ENCODE measurements at regions of chr2 and their contacts with region 1.

Region 1: DNA sequence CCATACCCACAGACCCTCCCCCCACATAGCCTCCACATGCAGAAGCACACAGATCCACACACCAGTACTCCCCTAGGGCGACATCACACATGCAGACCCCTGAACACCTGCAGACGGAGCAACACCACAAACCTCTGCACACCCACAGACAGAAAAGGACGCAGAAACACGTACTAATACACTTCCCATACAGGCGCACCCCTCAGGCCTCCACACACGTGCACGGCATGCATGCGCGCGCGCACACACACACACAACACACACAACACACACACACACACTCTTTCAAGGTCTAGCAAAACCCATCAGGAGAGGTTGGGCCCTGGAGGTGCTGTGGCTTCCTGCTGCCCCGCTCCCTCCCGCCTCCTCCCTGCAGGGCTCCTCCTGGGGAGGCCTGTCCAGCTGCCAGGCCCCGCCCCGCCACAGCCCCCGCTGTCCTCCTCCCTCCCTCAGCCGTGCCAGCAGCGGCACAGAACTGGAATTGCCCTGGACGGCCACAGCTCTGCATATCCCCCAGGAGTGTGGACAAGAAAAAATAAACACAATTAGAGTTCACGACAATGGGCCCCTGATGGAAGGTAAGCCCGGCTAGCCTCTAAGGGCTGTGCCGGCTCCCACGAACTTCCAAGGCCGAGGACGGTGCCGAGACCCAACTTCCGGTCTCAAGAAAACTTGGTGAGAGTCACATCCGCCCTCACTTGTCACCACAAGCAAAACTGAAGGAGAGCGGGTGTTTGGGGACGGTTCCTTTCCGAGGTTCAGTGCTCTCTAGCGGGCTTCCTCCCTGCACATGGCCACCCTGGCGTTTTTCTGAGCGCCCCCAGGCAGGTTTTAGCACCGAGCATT is 6.8 kb downstream of the ZFP36L2 start:
- DNase-seq: peak; percentile 80
- ATAC-seq: peak; percentile 75
- H3K4me3 ChIP-seq: peak overlapping the region; percentile 81
- H3K27ac ChIP-seq: peak overlapping the region; percentile 88
- H3K4me1 ChIP-seq: peaks cover 31% of the 10 kb centered on the region
- H3K27me3 ChIP-seq: no peaks in the 10 kb centered on the region
- CTCF ChIP-seq: no peak; a peak in 1 of 6 replicates
- EP300 ChIP-seq: peak; percentile 32 to 46; a peak in 1 of 4 replicates
- POLR2A ChIP-seq: no peak
- RAD21 ChIP-seq: no peak

Region 2: GRCh38 chr2:42974721-42975717 is 244.6 kb before region 1 on chr2:
- CTCF ChIA-PET with region 1: interaction called, 11 read pairs
- POLR2A ChIA-PET with region 1: interaction called, 3 read pairs
- RAD21 ChIA-PET with region 1: interaction called, 5 read pairs
- SMC1A ChIA-PET with region 1: interaction called, 3 read pairs
- in situ Hi-C with region 1: no loop called
- intact Hi-C with region 1: no loop called
- DNase-seq: no peak
- ATAC-seq: peak; percentile 67
- H3K4me3 ChIP-seq: no peak overlapping the region
- H3K27ac ChIP-seq: no peak overlapping the region
- H3K4me1 ChIP-seq: peaks cover 14% of the 10 kb centered on the region
- H3K27me3 ChIP-seq: peaks cover 0 to 1% of the 10 kb centered on the region in 2 experiments; a peak in 1 of 4 replicates
- CTCF ChIP-seq: peak; percentile 56 to 88 (median 83)
- EP300 ChIP-seq: no peak
- POLR2A ChIP-seq: no peak
- RAD21 ChIP-seq: peak; percentile 77

Region 3: GRCh38 chr2:43114210-43114609 is 105.4 kb before region 1 on chr2:
- CTCF ChIA-PET with region 1: no interaction called
- POLR2A ChIA-PET with region 1: no interaction called
- RAD21 ChIA-PET with region 1: no interaction called
- SMC1A ChIA-PET with region 1: no interaction called
- in situ Hi-C with region 1: no loop called
- intact Hi-C with region 1: no loop called
- DNase-seq: no peak
- ATAC-seq: no peak
- H3K4me3 ChIP-seq: no peak overlapping the region
- H3K27ac ChIP-seq: no peak overlapping the region
- H3K4me1 ChIP-seq: peaks cover 5% of the 10 kb centered on the region
- H3K27me3 ChIP-seq: no peaks in the 10 kb centered on the region
- CTCF ChIP-seq: no peak
- EP300 ChIP-seq: no peak
- POLR2A ChIP-seq: no peak
- RAD21 ChIP-seq: no peak

Region 4: DNA sequence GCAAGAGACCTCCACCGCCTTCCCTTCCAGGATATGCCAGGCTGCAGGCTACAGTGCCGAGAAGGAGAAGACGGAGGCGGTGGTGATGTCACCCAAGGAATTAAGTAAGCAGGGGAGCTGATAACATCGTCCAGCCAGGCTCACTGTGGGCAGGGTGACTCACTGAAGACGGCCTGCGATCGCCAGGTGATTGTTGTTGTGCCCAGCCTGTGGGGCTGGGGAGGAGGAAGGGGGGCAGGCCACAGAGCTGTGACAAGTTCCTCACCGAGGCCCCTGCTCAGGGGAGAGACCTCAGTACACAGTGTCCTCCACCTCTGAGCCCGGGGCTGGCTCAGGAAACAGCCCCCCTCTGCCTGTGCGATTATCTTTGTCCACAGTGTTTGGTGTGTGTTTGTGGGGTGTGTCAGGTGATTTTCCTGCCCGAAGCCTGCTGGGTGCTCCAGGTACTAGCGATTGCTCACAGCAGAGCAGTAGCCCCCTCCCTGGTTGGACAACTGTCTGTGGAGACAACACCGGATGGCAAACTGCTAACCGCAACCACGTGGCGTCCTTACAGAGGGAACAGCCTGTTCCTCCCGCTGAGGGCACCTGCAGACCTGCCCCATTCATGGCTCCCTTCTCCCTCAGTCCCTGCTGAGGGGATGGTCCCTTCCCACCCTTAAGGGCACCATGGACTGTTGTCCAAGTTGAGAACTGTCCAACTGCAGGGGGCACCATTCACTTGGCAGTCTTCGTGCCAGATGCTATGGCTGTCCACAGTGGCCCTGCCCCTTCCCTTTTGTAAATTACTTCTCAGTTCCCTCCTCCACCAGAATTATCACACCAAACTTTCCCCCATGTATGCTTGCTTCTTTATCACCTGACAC is 88.3 kb before region 1 on chr2:
- CTCF ChIA-PET with region 1: interaction called, 33 read pairs
- POLR2A ChIA-PET with region 1: interaction called, 5 read pairs
- RAD21 ChIA-PET with region 1: interaction called, 151 read pairs
- SMC1A ChIA-PET with region 1: interaction called, 16 read pairs
- in situ Hi-C with region 1: no loop called
- intact Hi-C with region 1: no loop called
- DNase-seq: no peak
- ATAC-seq: peak; percentile 81
- H3K4me3 ChIP-seq: no peak overlapping the region
- H3K27ac ChIP-seq: no peak overlapping the region
- H3K4me1 ChIP-seq: peaks cover 43% of the 10 kb centered on the region
- H3K27me3 ChIP-seq: no peaks in the 10 kb centered on the region
- CTCF ChIP-seq: peak; percentile 61 to 82 (median 62); a peak in 5 of 6 replicates
- EP300 ChIP-seq: no peak; a peak in 1 of 4 replicates
- POLR2A ChIP-seq: no peak
- RAD21 ChIP-seq: peak; percentile 78

Region 5: DNA sequence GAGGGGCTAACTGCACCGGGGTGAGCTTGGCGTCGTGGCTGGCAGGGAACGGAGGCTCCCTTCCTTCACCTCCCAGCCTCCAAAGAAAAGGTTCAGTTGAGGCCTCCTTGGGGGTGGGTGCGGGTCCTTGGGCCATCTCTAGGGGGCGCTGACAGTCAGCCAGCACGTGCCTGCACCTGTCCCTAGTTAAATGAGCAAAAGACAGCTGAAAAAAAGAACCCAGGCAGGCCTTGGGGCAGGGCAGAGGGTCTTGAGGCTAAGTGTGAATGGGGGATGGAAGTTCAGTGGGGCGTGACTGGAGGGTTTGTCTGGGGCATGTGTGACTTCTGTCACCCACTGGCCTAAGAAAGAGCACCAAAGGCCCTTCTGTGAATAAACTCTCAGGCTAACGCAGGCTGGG is 49.6 kb before region 1 on chr2:
- CTCF ChIA-PET with region 1: interaction called, 69 read pairs
- POLR2A ChIA-PET with region 1: interaction called, 11 read pairs
- RAD21 ChIA-PET with region 1: interaction called, 66 read pairs
- SMC1A ChIA-PET with region 1: interaction called, 147 read pairs
- in situ Hi-C with region 1: no loop called
- intact Hi-C with region 1: loop called (anchors 1 kb)
- DNase-seq: no peak
- ATAC-seq: peak; percentile 47
- H3K4me3 ChIP-seq: no peak overlapping the region
- H3K27ac ChIP-seq: no peak overlapping the region
- H3K4me1 ChIP-seq: peaks cover 35% of the 10 kb centered on the region
- H3K27me3 ChIP-seq: no peaks in the 10 kb centered on the region; a peak in 1 of 4 replicates
- CTCF ChIP-seq: peak; percentile 64 to 82 (median 81)
- EP300 ChIP-seq: no peak
- POLR2A ChIP-seq: no peak
- RAD21 ChIP-seq: peak; percentile 62

Region 6: DNA sequence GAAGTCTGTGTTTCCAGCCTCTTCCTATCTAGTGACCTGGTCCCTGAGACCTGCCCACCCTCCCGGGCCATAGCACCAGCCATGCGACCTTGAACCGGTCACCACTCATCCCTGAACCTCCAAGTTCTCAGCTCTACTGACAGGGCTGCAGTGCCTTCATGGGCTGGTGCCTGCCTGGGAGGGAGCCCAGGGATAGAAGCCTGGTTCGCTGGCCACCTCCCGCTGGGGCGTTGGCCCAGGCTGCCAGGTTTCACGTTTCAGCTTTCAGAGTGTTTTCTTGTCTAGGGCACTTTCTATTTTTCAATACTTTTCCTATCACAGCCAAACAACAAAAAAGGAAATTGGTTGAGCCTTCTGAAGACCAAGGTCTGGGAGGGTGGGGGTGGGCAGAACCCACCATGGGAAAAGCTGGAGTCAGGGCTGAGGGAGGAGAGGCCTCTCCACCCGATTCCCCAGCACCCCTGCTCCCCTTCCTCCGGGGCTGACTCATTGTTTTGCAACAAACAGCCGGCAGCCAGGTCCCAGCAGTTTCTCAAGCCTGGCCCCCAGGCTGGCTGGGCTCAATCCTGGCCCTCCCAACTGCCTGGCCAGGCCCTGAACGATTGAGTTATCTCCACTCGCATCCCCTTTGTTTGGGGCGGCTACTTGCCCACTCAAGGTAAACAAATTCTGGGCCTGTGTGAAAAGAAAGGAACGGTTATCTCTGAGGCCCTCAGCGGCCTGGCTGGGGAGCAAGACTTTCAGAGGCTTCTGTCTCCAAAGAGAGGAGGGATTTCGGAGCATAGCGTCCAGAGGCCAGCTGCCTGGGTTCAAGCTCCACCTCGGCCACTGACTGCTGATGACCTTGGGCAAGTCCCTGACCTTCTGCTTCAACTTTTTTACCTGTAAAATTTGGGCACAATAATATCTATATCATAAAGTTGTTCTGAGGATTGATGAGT is 40.7 kb before region 1 on chr2:
- CTCF ChIA-PET with region 1: interaction called, 15 read pairs
- POLR2A ChIA-PET with region 1: interaction called, 11 read pairs
- RAD21 ChIA-PET with region 1: interaction called, 66 read pairs
- SMC1A ChIA-PET with region 1: interaction called, 147 read pairs
- in situ Hi-C with region 1: no loop called
- intact Hi-C with region 1: loop called (anchors 1 kb)
- DNase-seq: no peak
- ATAC-seq: no peak
- H3K4me3 ChIP-seq: no peak overlapping the region
- H3K27ac ChIP-seq: no peak overlapping the region
- H3K4me1 ChIP-seq: peaks cover 13% of the 10 kb centered on the region
- H3K27me3 ChIP-seq: no peaks in the 10 kb centered on the region
- CTCF ChIP-seq: no peak
- EP300 ChIP-seq: no peak
- POLR2A ChIP-seq: no peak
- RAD21 ChIP-seq: no peak

Region 7: GRCh38 chr2:43194121-43194869 is 25.3 kb before region 1 on chr2:
- CTCF ChIA-PET with region 1: interaction called, 26 read pairs
- POLR2A ChIA-PET with region 1: interaction called, 30 read pairs
- RAD21 ChIA-PET with region 1: interaction called, 22 read pairs
- SMC1A ChIA-PET with region 1: interaction called, 57 read pairs
- in situ Hi-C with region 1: no loop called
- intact Hi-C with region 1: loop called (anchors 2 kb)
- DNase-seq: peak; percentile 53
- ATAC-seq: peak; percentile 72
- H3K4me3 ChIP-seq: no peak overlapping the region
- H3K27ac ChIP-seq: no peak overlapping the region; the same call in 1 of the 2 replicates
- H3K4me1 ChIP-seq: peaks cover 17% of the 10 kb centered on the region
- H3K27me3 ChIP-seq: no peaks in the 10 kb centered on the region
- CTCF ChIP-seq: no peak
- EP300 ChIP-seq: peak; percentile 22 to 47; a peak in 2 of 4 replicates
- POLR2A ChIP-seq: no peak
- RAD21 ChIP-seq: no peak

Region 8: DNA sequence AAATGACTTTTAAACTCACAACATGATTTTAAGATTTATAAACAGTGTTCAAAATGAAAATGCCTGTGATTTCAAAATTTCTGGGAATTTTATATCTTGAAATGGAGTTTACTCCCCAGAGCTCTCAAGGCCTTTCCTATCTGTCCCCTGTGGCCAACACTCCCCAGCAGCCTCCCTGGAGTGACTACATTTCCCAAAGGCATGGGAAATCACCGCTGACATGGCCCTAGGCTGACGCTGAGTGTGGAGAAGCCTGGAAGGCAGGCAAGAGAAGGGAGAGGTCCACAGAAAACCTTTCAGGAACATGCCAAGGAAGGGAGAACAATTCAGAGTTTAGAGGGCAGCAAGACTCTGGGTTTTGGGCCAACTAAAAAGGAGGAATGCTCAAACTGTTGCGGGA is 27.0 kb after region 1 on chr2:
- CTCF ChIA-PET with region 1: no interaction called
- POLR2A ChIA-PET with region 1: no interaction called
- RAD21 ChIA-PET with region 1: no interaction called
- SMC1A ChIA-PET with region 1: no interaction called
- in situ Hi-C with region 1: no loop called
- intact Hi-C with region 1: no loop called
- DNase-seq: no peak
- ATAC-seq: no peak
- H3K4me3 ChIP-seq: no peak overlapping the region
- H3K27ac ChIP-seq: no peak overlapping the region
- H3K4me1 ChIP-seq: no peaks in the 10 kb centered on the region
- H3K27me3 ChIP-seq: no peaks in the 10 kb centered on the region
- CTCF ChIP-seq: no peak
- EP300 ChIP-seq: no peak
- POLR2A ChIP-seq: no peak
- RAD21 ChIP-seq: no peak

Region 9: GRCh38 chr2:43553341-43553855 is 333.8 kb after region 1 on chr2:
- CTCF ChIA-PET with region 1: no interaction called
- POLR2A ChIA-PET with region 1: no interaction called
- RAD21 ChIA-PET with region 1: no interaction called
- SMC1A ChIA-PET with region 1: no interaction called
- in situ Hi-C with region 1: no loop called
- intact Hi-C with region 1: no loop called
- DNase-seq: no peak
- ATAC-seq: no peak
- H3K4me3 ChIP-seq: no peak overlapping the region
- H3K27ac ChIP-seq: no peak overlapping the region
- H3K4me1 ChIP-seq: no peaks in the 10 kb centered on the region
- H3K27me3 ChIP-seq: no peaks in the 10 kb centered on the region
- CTCF ChIP-seq: no peak
- EP300 ChIP-seq: no peak
- POLR2A ChIP-seq: no peak
- RAD21 ChIP-seq: no peak

Region 10: DNA sequence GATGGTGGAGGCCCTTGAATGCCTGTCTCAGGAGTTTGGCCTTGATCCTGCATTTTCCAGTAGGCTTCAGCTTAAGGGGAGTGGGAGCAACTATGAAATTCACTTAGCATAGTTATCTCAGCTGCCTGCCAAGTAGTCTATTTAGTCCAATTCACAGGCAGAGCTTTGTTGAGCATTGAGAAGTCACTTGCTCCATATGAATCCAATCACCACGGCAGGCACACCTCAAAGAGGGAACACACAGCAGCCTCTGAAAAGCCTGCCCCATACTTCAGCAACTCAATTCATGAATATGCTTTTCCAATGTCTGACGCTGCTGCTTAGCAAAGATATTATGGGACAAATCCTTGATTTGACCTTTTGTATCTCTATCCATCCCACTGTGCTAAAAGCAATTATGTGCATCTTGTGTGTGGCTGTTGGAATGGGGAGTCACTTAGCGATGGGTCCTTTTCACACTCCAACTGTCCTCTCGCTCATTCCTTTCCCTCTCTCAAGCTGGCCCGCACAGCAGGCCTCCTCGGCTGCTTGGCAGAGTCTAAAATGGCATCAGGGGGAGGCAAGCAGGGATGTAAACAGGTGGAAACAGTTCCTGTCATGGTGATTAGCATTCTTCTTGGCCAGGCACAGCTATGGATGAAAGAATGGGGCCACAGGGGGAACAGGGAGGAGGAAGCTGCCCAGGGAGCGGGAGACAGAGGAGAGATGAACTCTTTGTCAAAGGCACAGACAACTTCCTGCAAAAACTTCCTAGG is 832.2 kb after region 1 on chr2:
- CTCF ChIA-PET with region 1: no interaction called
- POLR2A ChIA-PET with region 1: no interaction called
- RAD21 ChIA-PET with region 1: no interaction called
- SMC1A ChIA-PET with region 1: no interaction called
- in situ Hi-C with region 1: no loop called
- intact Hi-C with region 1: no loop called
- DNase-seq: no peak
- ATAC-seq: no peak
- H3K4me3 ChIP-seq: no peak overlapping the region
- H3K27ac ChIP-seq: no peak overlapping the region
- H3K4me1 ChIP-seq: no peaks in the 10 kb centered on the region
- H3K27me3 ChIP-seq: no peaks in the 10 kb centered on the region; a peak in 1 of 4 replicates
- CTCF ChIP-seq: no peak
- EP300 ChIP-seq: no peak
- POLR2A ChIP-seq: no peak
- RAD21 ChIP-seq: no peak

Measured in GM12878 (cell line).